ENCODE measurements at regions of chr17 and their contacts with region 1.

Region 1: GRCh38 chr17:3740611-3741073 is 16.9 kb downstream of the HASPIN start:
- DNase-seq: no peak
- H3K4me3 ChIP-seq: no peak overlapping the region
- CTCF ChIP-seq: no peak

Region 2: GRCh38 chr17:3668279-3669085 is 72.2 kb before region 1 on chr17 and contains the starts of genes EMC6 and TAX1BP3:
- in situ Hi-C with region 1: no loop called
- DNase-seq: peak; percentile 94
- H3K4me3 ChIP-seq: peak within 1 kb of the TSS; percentile 99
- CTCF ChIP-seq: no peak

Region 3: GRCh38 chr17:3808701-3809100 is 68.1 kb after region 1 on chr17:
- in situ Hi-C with region 1: loop called (anchors 5 kb)
- DNase-seq: no peak
- H3K4me3 ChIP-seq: no peak overlapping the region
- CTCF ChIP-seq: no peak

Measured in astrocyte of the cerebellum (primary cell).